Activated naive CD4-positive, alpha-beta T cell treated with anti-CD3 and anti-CD28 coated beads for 36 hours (primary cell): ENCODE measurements at regions of chr9 and their contacts with region 1.

Region 1: GRCh38 chr9:100437860-100438805 is 11.2 kb downstream of the MSANTD3 start:
- DNase-seq: peak; percentile 83
- H3K4me3 Mint-ChIP-seq: no peak overlapping the region
- H3K27ac Mint-ChIP-seq: no peak overlapping the region
- H3K4me1 Mint-ChIP-seq: no peaks in the 10 kb centered on the region
- H3K27me3 Mint-ChIP-seq: no peaks in the 10 kb centered on the region

Region 2: DNA sequence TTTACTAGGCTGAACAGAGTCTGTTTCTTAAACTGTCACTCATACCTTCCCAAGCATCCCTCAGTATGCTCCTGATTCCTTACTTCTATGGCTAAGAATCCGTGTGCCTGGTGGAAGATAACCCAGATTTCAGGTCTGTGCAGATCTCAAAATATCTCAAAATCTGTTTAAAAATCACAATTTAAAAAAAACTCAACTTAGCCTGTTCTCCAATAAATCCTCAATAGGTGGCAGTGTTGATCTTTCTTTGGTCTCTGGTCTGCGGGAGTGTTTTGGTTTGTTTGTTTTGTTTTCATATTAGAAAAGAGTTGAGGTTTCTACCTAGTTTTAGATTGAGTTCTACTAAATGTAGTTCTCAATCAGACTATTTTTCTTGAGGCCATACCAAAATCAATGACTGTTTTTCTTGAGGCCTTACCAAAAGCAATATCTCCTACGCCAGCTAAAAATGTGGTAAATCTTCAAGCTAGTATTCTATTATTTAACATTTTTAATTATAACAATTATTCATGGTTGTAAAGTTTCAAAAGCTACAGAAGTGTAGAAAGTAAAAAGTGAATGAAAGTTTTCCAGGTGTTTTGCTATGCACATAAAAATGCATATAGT is 1275.3 kb before region 1 on chr9:
- CTCF ChIA-PET with region 1: no interaction called
- intact Hi-C with region 1: loop called (anchors 5 kb)
- DNase-seq: no peak
- H3K4me3 Mint-ChIP-seq: no peak overlapping the region
- H3K27ac Mint-ChIP-seq: no peak overlapping the region
- H3K4me1 Mint-ChIP-seq: peaks cover 15% of the 10 kb centered on the region
- H3K27me3 Mint-ChIP-seq: peaks cover 12% of the 10 kb centered on the region

Region 3: DNA sequence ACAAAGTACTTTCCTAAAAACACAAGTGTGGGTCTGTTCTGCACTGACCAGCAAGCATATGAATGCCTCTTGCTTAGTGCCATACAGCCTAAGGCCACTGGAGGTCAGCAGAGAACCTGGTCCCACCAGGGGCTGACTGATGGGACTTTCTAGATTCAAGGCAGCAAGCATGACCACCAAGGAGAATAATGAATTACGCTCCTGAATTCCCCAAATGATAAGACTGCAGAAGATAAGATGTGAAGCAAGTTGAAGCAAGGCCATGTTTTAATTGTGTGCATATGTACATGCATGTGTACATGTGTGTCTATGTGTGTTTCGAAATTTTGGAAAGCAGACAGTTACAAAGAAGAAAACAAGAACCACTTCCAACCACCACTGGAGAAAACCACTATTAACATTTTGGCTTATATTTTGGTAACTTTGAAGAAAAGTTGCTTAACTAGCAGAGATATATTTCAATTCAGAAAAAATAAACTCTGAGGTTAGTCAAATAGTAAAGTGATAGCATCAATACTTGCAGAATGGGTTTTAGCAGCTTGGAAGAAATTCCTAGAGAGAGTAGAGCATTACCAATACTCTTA is 409.8 kb before region 1 on chr9:
- CTCF ChIA-PET with region 1: interaction called, 6 read pairs
- intact Hi-C with region 1: loop called (anchors 5 kb)
- DNase-seq: peak; percentile 84
- H3K4me3 Mint-ChIP-seq: no peak overlapping the region
- H3K27ac Mint-ChIP-seq: no peak overlapping the region
- H3K4me1 Mint-ChIP-seq: peaks cover 3% of the 10 kb centered on the region
- H3K27me3 Mint-ChIP-seq: no peaks in the 10 kb centered on the region

Region 4: GRCh38 chr9:100426530-100427428 is 11.4 kb before region 1 on chr9 and contains the start of gene MSANTD3:
- CTCF ChIA-PET with region 1: interaction called, 9 read pairs
- intact Hi-C with region 1: loop called (anchors 1 kb)
- DNase-seq: peak; percentile 52
- H3K4me3 Mint-ChIP-seq: peak within 1 kb of the TSS; percentile 91
- H3K27ac Mint-ChIP-seq: peak within 1 kb of the TSS; percentile 82
- H3K4me1 Mint-ChIP-seq: peaks cover 30% of the 10 kb centered on the region
- H3K27me3 Mint-ChIP-seq: no peaks in the 10 kb centered on the region
- total RNA-seq, gene MSANTD3: 10.4 to 11.5 TPM

Region 5: DNA sequence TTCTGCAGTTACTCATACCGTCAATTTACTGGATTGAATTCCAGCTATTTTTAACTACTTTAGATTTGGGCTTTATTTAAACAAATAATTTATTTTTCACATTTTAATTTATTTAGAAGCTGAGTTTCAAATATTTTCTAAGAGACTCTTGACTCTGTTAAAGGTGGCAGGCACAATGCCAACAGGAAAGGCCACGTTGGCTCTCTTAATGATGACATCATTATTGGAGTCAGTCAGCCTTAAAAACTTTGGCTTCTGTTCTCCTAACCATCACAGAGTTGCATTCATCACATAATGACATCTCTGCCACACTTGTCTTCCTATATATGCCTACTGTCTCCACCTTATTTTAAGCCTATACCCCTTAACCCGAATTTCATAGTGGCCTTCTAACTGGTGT is 418.1 kb after region 1 on chr9:
- CTCF ChIA-PET with region 1: no interaction called
- intact Hi-C with region 1: no loop called
- DNase-seq: no peak
- H3K4me3 Mint-ChIP-seq: no peak overlapping the region
- H3K27ac Mint-ChIP-seq: no peak overlapping the region
- H3K4me1 Mint-ChIP-seq: no peaks in the 10 kb centered on the region
- H3K27me3 Mint-ChIP-seq: no peaks in the 10 kb centered on the region